ENCODE measurements at regions of chr1 and their contacts with region 1.

Region 1: GRCh38 chr1:235504496-235505222 is 407 bp upstream of the B3GALNT2 start:
- DNase-seq: peak; percentile 97 to 100 (median 98)
- ATAC-seq: peak; percentile 87
- H3K4me3 ChIP-seq: peak overlapping the region; percentile 66
- H3K27ac ChIP-seq: peak overlapping the region; percentile 96
- H3K4me1 ChIP-seq: peaks cover 18 to 21% of the 10 kb centered on the region in 2 experiments; a peak in 4 of 5 replicates
- H3K27me3 ChIP-seq: no peaks in the 10 kb centered on the region
- CTCF ChIP-seq: peak; percentile 90 to 97 (median 91)
- EP300 ChIP-seq: 0 out of 2 replicates have a peak, but pooled peaks have one; percentile 21
- POLR2A ChIP-seq: peak; percentile 97
- RAD21 ChIP-seq: peak; percentile 50 to 57

Region 2: DNA sequence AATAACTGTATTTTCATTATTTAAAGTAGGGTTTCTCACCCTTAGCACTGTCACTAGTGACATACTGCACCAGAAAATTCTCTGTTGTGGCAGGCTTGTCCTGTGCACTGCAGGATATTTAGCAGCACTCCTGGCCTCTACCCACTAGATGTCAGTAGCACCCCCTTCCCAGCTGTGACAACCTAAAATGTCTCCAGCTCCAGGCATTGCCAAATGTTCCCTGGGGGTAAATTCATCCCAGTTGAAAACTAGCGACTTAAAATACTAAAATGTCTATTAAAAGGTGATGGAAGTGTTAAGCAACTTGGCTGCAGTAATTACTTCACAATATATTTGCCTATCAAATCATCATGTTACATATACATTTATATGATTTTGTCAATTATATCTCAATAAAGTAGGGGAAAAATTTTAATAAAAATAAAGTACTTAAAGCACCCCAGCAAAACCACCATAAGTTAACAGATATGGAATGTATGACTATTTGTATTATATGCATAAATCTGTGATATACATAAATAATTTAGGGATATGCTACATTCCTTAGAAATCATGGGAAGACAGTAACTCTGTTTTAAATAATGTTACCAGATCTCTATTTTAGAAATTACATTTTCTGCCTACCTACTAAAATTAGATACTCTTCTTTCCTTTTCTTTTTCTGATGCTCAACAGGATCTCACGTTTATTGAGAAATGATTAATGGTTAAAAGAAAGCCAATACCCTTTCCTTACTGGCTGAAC is 251.3 kb before region 1 on chr1:
- CTCF ChIA-PET with region 1: no interaction called
- POLR2A ChIA-PET with region 1: interaction called, 3 read pairs
- in situ Hi-C with region 1: no loop called
- intact Hi-C with region 1: loop called (anchors 10 kb)
- DNase-seq: peak; percentile 23 to 83 (median 44)
- ATAC-seq: peak; percentile 100
- H3K4me3 ChIP-seq: no peak overlapping the region
- H3K27ac ChIP-seq: no peak overlapping the region
- H3K4me1 ChIP-seq: no peaks in the 10 kb centered on the region
- H3K27me3 ChIP-seq: no peaks in the 10 kb centered on the region
- CTCF ChIP-seq: peak; percentile 92 to 96 (median 93)
- EP300 ChIP-seq: no peak
- POLR2A ChIP-seq: no peak
- RAD21 ChIP-seq: peak; percentile 90 to 96

Region 3: GRCh38 chr1:235442788-235443429 is 61.8 kb before region 1 on chr1:
- CTCF ChIA-PET with region 1: no interaction called
- POLR2A ChIA-PET with region 1: interaction called, 5 read pairs
- in situ Hi-C with region 1: no loop called
- intact Hi-C with region 1: loop called (anchors 5 kb)
- DNase-seq: peak; percentile 36 to 80 (median 58)
- ATAC-seq: peak; percentile 89
- H3K4me3 ChIP-seq: no peak overlapping the region
- H3K27ac ChIP-seq: peak overlapping the region; percentile 81
- H3K4me1 ChIP-seq: peaks cover 6 to 10% of the 10 kb centered on the region in 2 experiments; a peak in 4 of 5 replicates
- H3K27me3 ChIP-seq: no peaks in the 10 kb centered on the region
- CTCF ChIP-seq: no peak
- EP300 ChIP-seq: peak; percentile 34
- POLR2A ChIP-seq: no peak
- RAD21 ChIP-seq: no peak